ENCODE measurements at regions of chr14 and their contacts with region 1.

Region 1: GRCh38 chr14:94129111-94129757 is at the start of gene IFI27L2:
- DNase-seq: peak; percentile 30 to 81 (median 46)
- ATAC-seq: peak; percentile 89 to 95
- H3K4me3 Mint-ChIP-seq: peak within 1 kb of the TSS; percentile 87 to 93 (median 90)
- H3K27ac Mint-ChIP-seq: peak within 1 kb of the TSS; percentile 61 to 93 (median 80)
- H3K4me1 Mint-ChIP-seq: peaks cover 19 to 23% (median 20%) of the 10 kb centered on the region in 4 donors
- H3K27me3 Mint-ChIP-seq: peaks cover 0 to 9% (median 0%) of the 10 kb centered on the region in 5 donors
- polyA plus RNA-seq, gene IFI27L2: 59.3 to 86.5 (median 64.2) TPM

Region 2: DNA sequence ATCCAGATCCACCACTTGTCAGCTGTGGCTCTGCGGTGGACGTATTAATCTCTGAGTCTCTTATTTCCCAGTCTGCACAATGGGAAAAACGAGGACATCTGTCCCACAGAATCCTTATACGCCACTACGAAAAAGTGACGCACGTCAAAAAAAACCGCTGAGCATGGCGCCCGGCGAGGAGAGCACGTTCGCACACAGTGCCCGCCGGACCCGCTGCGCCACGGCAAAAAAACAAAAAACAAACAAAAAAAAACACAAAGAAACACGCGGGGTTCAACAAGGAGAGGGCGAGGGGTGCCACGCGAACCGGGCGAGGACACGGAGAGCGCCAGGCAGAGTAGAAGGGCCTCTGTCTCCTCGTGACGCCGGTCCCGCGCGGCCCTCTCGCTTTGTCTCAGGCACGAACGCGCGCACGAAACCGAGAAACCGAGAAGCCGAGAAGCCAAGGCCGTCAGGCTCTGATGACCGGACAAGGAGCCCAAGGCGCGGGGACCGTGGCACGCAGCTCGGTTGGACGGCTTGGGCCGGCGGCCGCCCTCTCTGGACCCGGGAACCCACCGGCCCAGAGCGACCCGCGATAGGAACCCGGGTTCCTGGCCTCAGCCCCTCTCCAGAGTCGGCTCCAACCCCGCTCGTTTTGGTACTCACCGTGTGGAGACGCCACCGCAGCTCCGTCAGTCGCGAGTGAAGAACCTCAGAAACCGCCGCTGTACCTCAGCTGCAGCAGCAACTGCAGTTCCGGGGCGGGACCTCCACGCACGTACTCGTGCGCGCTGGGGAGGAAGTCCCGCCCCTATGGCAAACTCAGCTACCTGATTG is 48.6 kb before region 1 on chr14 and contains the start of gene DDX24:
- POLR2A ChIA-PET with region 1: interaction called, 18 read pairs
- DNase-seq: peak; percentile 92 to 98 (median 96)
- ATAC-seq: peak; percentile 87 to 90
- H3K4me3 Mint-ChIP-seq: peak within 1 kb of the TSS; percentile 89 to 100 (median 99)
- H3K27ac Mint-ChIP-seq: peak within 1 kb of the TSS; percentile 94 to 100 (median 99)
- H3K4me1 Mint-ChIP-seq: peaks cover 29 to 55% (median 50%) of the 10 kb centered on the region in 4 donors
- H3K27me3 Mint-ChIP-seq: no peaks in the 10 kb centered on the region
- polyA plus RNA-seq, gene DDX24: 185 to 274 (median 244) TPM

Region 3: DNA sequence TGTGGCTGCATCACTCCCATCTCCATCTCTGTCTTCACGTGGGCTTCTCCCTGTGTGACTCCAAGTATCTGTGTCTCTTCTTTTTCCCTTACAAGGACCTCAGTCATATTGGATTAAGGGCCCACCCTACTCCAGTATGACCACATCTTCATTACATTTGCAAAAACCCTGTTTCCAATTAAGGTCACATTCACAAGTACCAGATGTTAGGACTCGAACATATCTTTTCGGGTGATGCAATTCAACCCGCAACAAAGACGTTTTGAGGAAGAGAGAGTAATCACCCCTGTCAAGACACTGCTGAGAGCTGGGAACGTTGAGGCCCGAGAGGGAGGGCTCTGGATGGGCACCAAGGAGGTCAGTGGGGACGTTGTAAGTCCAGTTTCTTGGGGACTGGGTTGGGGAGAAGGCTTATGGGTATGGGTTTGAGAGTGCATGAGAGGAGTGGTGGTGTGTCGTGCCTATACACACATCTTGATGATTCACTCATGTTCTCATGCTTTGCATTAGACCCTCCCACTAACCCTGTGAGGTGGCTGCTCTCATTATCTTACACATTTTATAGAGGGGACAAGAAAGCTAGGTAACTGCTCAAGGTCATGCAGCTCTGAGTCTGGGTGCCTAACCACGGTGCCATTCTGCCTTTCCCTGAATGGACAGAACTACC is 30.8 kb before region 1 on chr14:
- POLR2A ChIA-PET with region 1: no interaction called
- DNase-seq: no peak
- ATAC-seq: no peak
- H3K4me3 Mint-ChIP-seq: no peak overlapping the region
- H3K27ac Mint-ChIP-seq: no peak overlapping the region
- H3K4me1 Mint-ChIP-seq: peaks cover 0 to 7% (median 0%) of the 10 kb centered on the region in 4 donors
- H3K27me3 Mint-ChIP-seq: peaks cover 0 to 2% (median 0%) of the 10 kb centered on the region in 5 donors

Region 4: DNA sequence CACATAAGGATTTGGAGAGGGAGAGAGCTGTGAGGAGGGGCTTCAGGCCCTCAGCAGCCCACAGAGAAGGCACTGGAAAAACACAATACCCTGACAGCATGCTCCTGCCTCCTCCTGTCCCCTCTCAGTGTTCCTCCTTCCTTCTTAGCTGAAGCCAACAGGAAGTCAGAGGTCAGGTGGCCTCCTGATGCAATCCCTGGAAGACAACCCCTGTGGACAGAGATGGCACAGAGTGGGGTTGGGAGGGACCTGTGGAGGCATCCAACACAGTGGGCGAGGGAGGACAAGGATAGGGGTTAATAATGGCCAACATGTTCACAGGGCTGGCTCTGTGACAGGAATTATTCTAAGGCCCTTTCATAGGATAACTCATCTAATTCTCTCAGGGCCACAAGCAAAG is 15.5 kb after region 1 on chr14:
- POLR2A ChIA-PET with region 1: no interaction called
- DNase-seq: no peak
- ATAC-seq: no peak
- H3K4me3 Mint-ChIP-seq: no peak overlapping the region
- H3K27ac Mint-ChIP-seq: no peak overlapping the region
- H3K4me1 Mint-ChIP-seq: peaks cover 5 to 22% (median 20%) of the 10 kb centered on the region in 4 donors
- H3K27me3 Mint-ChIP-seq: peaks cover 0 to under 1% (median 0%) of the 10 kb centered on the region in 5 donors

Measured in naive thymus-derived CD8-positive, alpha-beta T cell (primary cell).